BJ (cell line): ENCODE measurements at regions of chr12 and their contacts with region 1.

Region 1: DNA sequence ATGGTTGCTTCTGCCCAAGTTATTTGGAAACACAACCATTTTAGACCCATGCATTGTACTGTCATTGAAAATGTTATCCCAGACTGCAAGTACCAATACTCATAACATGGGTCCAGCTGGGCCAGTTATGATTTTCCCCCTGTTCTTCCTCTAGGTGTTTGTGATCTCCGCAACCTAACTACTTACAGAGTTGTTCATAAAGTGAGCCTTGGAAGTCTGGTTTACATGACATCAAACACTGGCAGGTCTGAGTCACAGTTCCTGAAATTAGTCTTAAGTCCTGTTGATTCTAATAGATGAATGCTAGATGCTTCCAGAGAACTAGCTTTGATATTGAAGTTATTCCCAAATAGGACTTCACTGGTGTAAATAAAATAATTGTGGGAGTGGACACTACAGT is 487.0 kb downstream of the MED13L start:
- DNase-seq: no peak
- H3K4me3 ChIP-seq: no peak overlapping the region
- H3K27me3 ChIP-seq: no peaks in the 10 kb centered on the region; the same call in 1 of the 2 replicates
- CTCF ChIP-seq: no peak

Region 2: GRCh38 chr12:115491511-115492250 is 298.8 kb before region 1 on chr12:
- CTCF ChIA-PET with region 1: no interaction called
- POLR2A ChIA-PET with region 1: no interaction called
- DNase-seq: no peak
- H3K4me3 ChIP-seq: no peak overlapping the region
- H3K27me3 ChIP-seq: no peaks in the 10 kb centered on the region
- CTCF ChIP-seq: no peak

Region 3: GRCh38 chr12:115857160-115857922 is 66.8 kb after region 1 on chr12:
- CTCF ChIA-PET with region 1: no interaction called
- POLR2A ChIA-PET with region 1: no interaction called
- DNase-seq: no peak
- H3K4me3 ChIP-seq: no peak overlapping the region
- H3K27me3 ChIP-seq: peaks cover 12% of the 10 kb centered on the region
- CTCF ChIP-seq: peak; percentile 30

Region 4: GRCh38 chr12:116087962-116088361 is 297.4 kb after region 1 on chr12:
- CTCF ChIA-PET with region 1: no interaction called
- POLR2A ChIA-PET with region 1: interaction called, 13 read pairs
- DNase-seq: no peak
- H3K4me3 ChIP-seq: no peak overlapping the region
- H3K27me3 ChIP-seq: no peaks in the 10 kb centered on the region
- CTCF ChIP-seq: no peak